ENCODE measurements at regions of chr2 and their contacts with region 1.

Region 1: DNA sequence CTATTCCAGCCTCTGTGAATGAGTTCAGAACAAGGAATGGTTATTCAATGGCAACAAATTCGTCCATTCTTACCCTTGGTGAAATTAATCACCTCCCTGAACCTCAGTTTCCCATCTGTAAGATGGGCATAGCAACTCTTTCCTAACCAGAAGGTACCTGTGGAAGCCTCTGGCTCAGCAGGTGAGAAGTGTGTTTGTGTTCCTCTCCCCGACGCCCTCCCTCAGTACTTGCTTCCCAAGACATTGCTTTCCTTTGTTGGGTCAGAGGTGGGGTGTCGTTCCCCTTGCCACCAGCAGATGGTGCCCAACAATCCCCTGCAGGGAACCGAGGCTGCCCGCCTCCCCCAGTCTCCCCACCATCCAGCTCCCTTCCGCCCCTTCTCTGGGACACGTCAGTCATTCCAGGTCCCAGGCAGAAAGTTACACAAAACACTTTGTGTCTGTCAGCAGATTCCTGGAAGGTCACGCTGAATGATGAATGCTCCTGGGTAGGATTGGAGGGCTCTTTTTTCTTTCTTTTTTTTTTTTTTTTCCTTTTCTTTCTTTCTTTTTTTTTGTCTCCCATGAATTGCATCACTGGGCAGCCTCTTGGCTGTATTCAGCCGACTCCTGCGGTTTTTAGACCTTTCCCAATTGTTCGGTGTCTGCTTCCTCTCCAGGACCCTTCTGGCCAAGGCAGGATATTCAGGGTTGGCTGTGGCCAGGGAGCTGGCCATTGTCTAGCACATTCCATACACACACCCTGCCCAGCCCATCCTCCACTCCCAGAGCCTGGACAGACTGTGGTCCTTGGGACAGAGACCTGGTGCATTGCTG is 117.3 kb downstream of the LPIN1 start:
- DNase-seq: peak; percentile 38 to 71 (median 57)
- ATAC-seq: peak; percentile 88
- H3K4me3 ChIP-seq: peak overlapping the region; percentile 14
- H3K4me3 Mint-ChIP-seq: peak overlapping the region; percentile 28 to 71 (median 54)
- H3K27ac ChIP-seq: no peak overlapping the region
- H3K27ac Mint-ChIP-seq: peak overlapping the region in 2 of 9 donors; percentile 13 to 22
- H3K4me1 ChIP-seq: peaks cover 0 to 7% of the 10 kb centered on the region in 2 donors
- H3K4me1 Mint-ChIP-seq: peaks cover 8 to 14% (median 11%) of the 10 kb centered on the region in 7 donors
- H3K27me3 ChIP-seq: no peaks in the 10 kb centered on the region
- H3K27me3 Mint-ChIP-seq: peaks cover 0 to 28% (median 0%) of the 10 kb centered on the region in 5 donors

Region 2: DNA sequence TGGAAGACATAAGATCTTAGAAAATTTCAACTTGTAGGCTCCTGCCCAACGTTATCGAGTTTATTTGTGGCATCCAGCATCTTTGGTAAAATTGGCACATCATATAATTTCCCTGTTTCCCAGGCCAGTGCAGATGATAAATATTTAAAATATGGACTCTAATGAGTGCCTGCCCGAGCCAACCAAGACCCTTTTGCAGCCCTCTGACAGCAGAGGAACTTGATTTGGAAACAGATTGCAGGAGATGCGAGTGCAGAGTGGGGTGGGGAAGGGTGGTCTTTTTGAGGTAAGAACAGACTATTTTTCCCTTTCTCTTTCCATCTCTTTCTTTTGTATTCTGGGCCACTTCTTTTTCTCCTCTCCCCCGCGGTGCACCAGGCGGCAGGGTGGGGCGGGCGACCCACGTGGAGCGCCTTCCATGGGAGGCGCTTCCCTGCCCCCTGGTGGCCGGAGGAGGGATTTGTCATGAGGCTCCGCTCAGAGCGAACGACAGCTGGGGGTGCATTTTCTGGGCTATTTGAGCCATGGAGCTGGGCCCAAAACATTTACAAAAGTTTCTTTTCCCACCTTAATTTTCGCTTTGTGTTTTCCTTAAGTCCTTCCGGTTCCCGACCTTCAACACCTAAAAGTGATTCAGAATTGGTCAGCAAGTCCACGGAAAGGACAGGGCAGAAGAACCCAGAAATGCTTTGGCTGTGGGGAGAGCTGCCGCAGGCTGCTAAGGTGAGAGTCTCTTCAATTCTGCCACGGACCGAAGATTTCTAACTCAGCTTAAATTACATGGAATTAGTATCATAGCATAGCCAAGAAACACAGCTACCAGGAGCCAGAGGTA is 84.6 kb before region 1 on chr2:
- CTCF ChIA-PET with region 1: no interaction called
- POLR2A ChIA-PET with region 1: no interaction called
- intact Hi-C with region 1: no loop called
- DNase-seq: peak; percentile 66 to 88 (median 83)
- ATAC-seq: peak; percentile 98
- H3K4me3 ChIP-seq: peak overlapping the region; percentile 32
- H3K4me3 Mint-ChIP-seq: peak overlapping the region; percentile 53 to 80 (median 71)
- H3K27ac ChIP-seq: no peak overlapping the region
- H3K27ac Mint-ChIP-seq: peak overlapping the region; percentile 0 to 88 (median 73)
- H3K4me1 ChIP-seq: peaks cover 13 to 15% of the 10 kb centered on the region in 2 donors
- H3K4me1 Mint-ChIP-seq: peaks cover 23 to 51% (median 41%) of the 10 kb centered on the region in 7 donors
- H3K27me3 ChIP-seq: no peaks in the 10 kb centered on the region
- H3K27me3 Mint-ChIP-seq: no peaks in the 10 kb centered on the region

Region 3: GRCh38 chr2:11891028-11891427 is 27.3 kb after region 1 on chr2:
- CTCF ChIA-PET with region 1: no interaction called
- POLR2A ChIA-PET with region 1: no interaction called
- intact Hi-C with region 1: no loop called
- DNase-seq: no peak
- ATAC-seq: no peak
- H3K4me3 ChIP-seq: no peak overlapping the region
- H3K4me3 Mint-ChIP-seq: no peak overlapping the region
- H3K27ac ChIP-seq: no peak overlapping the region
- H3K27ac Mint-ChIP-seq: no peak overlapping the region
- H3K4me1 ChIP-seq: no peaks in the 10 kb centered on the region
- H3K4me1 Mint-ChIP-seq: peaks cover 0 to 13% (median 3%) of the 10 kb centered on the region in 7 donors
- H3K27me3 ChIP-seq: no peaks in the 10 kb centered on the region
- H3K27me3 Mint-ChIP-seq: peaks cover 0 to 4% (median 0%) of the 10 kb centered on the region in 5 donors

Region 4: GRCh38 chr2:12032398-12032797 is 168.7 kb after region 1 on chr2:
- CTCF ChIA-PET with region 1: no interaction called
- POLR2A ChIA-PET with region 1: no interaction called
- intact Hi-C with region 1: loop called in 1 of 2 experiments (anchors 5 kb)
- DNase-seq: no peak
- ATAC-seq: peak; percentile 29
- H3K4me3 ChIP-seq: no peak overlapping the region
- H3K4me3 Mint-ChIP-seq: no peak overlapping the region
- H3K27ac ChIP-seq: no peak overlapping the region
- H3K27ac Mint-ChIP-seq: no peak overlapping the region
- H3K4me1 ChIP-seq: peaks cover 12 to 20% of the 10 kb centered on the region in 2 donors
- H3K4me1 Mint-ChIP-seq: peaks cover 3 to 47% (median 33%) of the 10 kb centered on the region in 7 donors
- H3K27me3 ChIP-seq: no peaks in the 10 kb centered on the region
- H3K27me3 Mint-ChIP-seq: peaks cover 0 to 14% (median 0%) of the 10 kb centered on the region in 5 donors

Region 5: DNA sequence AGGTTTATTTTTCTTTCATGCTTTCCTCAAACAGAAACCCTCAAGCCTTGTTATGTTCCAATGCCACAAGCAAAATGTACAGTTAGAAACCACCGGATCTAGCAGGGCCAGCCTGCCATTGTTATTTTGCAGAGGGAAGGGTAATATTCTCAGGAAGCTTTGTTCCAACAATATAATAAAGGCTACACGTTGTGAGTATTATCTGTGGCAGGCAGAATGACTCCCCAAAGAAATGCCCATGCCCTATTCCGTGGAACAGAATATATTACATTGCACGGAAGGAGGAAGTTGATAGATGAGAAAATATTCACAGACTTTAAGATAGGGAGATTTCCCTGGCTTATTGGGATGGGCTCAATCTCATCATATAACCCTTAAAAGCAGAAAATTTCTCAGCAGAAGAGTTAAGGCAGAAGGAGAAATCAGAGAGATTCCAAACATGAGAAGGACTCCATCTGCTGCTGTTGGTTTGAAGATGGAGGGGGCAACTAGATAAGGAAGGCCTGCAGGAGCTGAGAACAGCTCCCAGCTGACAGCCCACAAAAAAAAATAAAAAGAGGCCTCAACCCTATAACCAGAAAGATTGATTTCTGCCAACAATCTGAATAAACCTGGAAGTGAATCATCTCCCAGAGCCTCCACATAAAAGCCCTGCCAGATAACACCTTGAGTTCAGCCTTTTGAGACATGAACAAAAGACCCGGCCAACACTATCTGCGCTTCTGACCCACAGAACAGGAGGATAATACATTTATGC is 349.3 kb after region 1 on chr2:
- CTCF ChIA-PET with region 1: no interaction called
- POLR2A ChIA-PET with region 1: no interaction called
- intact Hi-C with region 1: loop called in 1 of 2 experiments (anchors 10 kb)
- DNase-seq: no peak
- ATAC-seq: no peak
- H3K4me3 ChIP-seq: no peak overlapping the region
- H3K4me3 Mint-ChIP-seq: no peak overlapping the region
- H3K27ac ChIP-seq: no peak overlapping the region
- H3K27ac Mint-ChIP-seq: peak overlapping the region in 1 of 9 donors; percentile 58
- H3K4me1 ChIP-seq: no peaks in the 10 kb centered on the region
- H3K4me1 Mint-ChIP-seq: peaks cover 0 to 4% (median 0%) of the 10 kb centered on the region in 7 donors
- H3K27me3 ChIP-seq: no peaks in the 10 kb centered on the region
- H3K27me3 Mint-ChIP-seq: peaks cover 0 to 10% (median 0%) of the 10 kb centered on the region in 5 donors

Region 6: GRCh38 chr2:12326449-12327190 is 462.9 kb after region 1 on chr2:
- CTCF ChIA-PET with region 1: interaction called, 7 read pairs
- POLR2A ChIA-PET with region 1: no interaction called
- intact Hi-C with region 1: loop called (anchors 1 to 5 kb)
- DNase-seq: peak in 5 of 9 donors; percentile 15 to 31 (median 18)
- ATAC-seq: peak; percentile 41
- H3K4me3 ChIP-seq: no peak overlapping the region
- H3K4me3 Mint-ChIP-seq: no peak overlapping the region
- H3K27ac ChIP-seq: no peak overlapping the region
- H3K27ac Mint-ChIP-seq: peak overlapping the region in 1 of 9 donors; percentile 2
- H3K4me1 ChIP-seq: no peaks in the 10 kb centered on the region
- H3K4me1 Mint-ChIP-seq: peaks cover 3 to 18% (median 10%) of the 10 kb centered on the region in 7 donors
- H3K27me3 ChIP-seq: no peaks in the 10 kb centered on the region
- H3K27me3 Mint-ChIP-seq: peaks cover 0 to 17% (median 3%) of the 10 kb centered on the region in 5 donors